Dorsolateral prefrontal cortex (tissue), 120 donors: ENCODE measurements at regions of chr2 and their contacts with region 1.

Region 1: DNA sequence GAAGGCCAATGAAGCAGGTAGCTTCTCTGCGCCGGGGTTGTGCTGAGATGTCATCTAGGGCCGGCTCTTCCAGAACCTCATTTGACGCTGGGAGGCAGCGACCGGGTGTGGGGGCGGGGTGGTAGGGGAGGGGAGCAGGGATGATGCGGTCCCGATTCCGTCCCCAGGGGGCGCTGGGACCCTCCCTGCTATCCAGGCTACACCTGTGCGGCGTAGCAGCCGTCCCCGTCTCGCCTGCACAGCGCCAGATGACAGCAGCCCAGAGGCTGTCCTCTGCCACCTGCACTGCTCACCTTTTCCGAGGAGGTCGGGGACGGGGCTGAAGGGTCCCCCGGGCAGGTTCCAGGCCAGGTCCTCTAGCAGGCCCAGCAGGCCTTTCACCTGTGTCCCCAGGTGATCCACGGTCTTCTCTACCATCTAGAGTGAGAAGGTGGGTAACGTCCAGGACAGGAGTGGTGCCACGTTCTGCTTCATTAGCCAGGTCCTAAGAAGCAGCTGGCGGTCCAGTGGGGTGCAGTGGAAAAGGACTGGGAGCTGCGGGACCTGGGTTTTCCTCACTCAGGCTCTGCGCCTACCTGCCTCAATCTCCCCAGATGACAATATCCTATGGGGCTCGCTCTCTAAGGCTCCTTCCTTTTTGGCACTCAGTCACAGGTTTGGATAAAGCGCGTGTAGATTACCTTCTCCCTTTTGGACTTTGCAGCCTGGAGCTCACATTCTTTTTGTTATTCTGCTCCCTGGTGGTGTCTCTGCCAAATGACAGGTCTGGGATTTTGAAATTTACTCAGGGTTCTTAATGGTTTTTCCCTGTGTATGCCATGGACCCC is 56.0 kb upstream of the RAB6C start:
- DNase-seq: peak in 1 of 10 donors; percentile 60
- H3K4me3 ChIP-seq: peak overlapping the region; percentile 11 to 65 (median 44)
- H3K27ac ChIP-seq: peak overlapping the region in 7 of 59 donors; percentile 6 to 68 (median 36)
- H3K27me3 ChIP-seq: peaks cover 0 to 12% (median 0%) of the 10 kb centered on the region in 45 donors
- CTCF ChIP-seq: peak; percentile 39 to 78 (median 62)

Region 2: GRCh38 chr2:128736689-128737545 is 1186.6 kb before region 1 on chr2:
- intact Hi-C with region 1: loop called in 1 of 2 experiments (anchors 2 kb)
- DNase-seq: peak; percentile 68 to 85 (median 80)
- H3K4me3 ChIP-seq: peak overlapping the region in 58 of 59 donors; percentile 9 to 63 (median 49)
- H3K27ac ChIP-seq: peak overlapping the region in 18 of 59 donors; percentile 0 to 83 (median 36)
- H3K27me3 ChIP-seq: no peaks in the 10 kb centered on the region
- CTCF ChIP-seq: peak; percentile 82 to 99 (median 96)

Region 3: GRCh38 chr2:129734343-129735034 is 189.0 kb before region 1 on chr2:
- intact Hi-C with region 1: no loop called
- DNase-seq: no peak
- H3K4me3 ChIP-seq: no peak overlapping the region
- H3K27ac ChIP-seq: no peak overlapping the region
- H3K27me3 ChIP-seq: no peaks in the 10 kb centered on the region
- CTCF ChIP-seq: no peak